ENCODE measurements at regions of chr6 and their contacts with region 1.

Region 1: DNA sequence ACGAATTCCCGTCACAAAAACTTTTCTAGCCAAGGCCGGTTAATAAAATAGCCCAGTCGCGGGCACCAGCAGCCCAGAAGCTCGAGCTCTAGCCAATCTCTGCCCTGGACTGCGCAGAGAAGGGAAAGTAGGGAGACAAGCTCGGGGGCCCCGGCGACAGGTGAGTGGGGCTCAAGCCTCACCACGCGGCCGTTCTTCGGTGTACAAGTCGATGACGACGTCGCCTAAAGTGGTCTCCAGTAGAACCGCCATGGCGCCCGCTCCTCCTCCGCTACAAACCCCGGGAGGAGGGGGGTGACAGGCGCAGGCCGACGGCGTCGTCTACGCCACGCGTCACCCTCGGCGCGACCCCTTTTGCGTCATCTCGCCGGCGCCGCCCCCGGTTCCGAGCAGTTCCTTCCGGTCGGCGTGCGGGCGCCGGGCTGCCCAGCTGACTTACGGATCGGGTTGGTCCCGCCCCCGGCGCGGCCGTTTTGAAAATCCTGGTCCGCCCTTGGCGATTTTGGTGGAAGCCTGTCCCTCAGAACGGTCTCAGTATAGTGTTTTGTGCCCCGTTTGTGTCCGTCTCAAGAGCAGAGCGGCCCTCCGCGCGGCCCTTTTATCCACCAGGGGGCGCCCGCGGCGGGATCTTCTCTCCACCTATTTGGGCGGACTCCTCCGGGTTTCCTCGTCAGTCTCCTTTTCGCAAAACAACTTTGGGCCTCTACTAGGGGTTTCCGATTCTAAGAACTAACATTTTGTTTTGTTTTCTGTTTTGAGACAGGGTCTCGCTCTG is at the start of gene PPIL4:
- DNase-seq: peak; percentile 73 to 86
- H3K4me3 ChIP-seq: peak within 1 kb of the TSS; percentile 76
- H3K27ac ChIP-seq: peak within 1 kb of the TSS; percentile 84
- H3K4me1 ChIP-seq: peaks cover 13% of the 10 kb centered on the region
- H3K27me3 ChIP-seq: no peaks in the 10 kb centered on the region
- CTCF ChIP-seq: peak; percentile 98
- total RNA-seq, gene PPIL4: 9.6 and 13.5 TPM in 2 replicates

Region 2: DNA sequence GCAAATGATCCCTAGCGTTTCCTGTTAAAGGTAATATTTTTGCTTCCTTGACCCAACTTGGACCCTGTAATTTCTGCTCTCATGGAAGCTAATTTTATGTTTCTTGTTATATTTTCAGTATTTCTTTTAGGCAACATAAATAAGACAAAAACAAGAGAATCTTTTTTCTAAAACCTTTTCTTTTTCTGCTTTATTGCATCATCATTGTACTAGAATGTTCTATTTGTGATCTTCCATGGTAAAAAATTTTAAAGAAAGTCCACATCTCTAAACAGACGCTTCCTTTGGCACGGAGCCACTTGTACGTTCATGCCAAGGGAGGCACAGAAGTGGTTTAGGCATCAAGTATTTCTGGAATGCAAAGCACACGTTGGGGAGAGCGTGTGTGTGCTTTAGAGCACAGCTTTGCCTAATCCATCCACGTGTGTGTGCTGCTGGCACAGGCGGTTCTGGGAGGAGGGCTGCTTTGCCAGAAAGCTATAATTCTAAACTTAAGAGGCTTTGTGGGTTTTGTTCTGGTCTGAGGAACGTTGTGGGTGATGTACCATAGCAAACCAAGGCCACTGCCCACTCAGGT is 1105.0 kb before region 1 on chr6:
- CTCF ChIA-PET with region 1: interaction called, 10 read pairs
- POLR2A ChIA-PET with region 1: no interaction called
- intact Hi-C with region 1: no loop called
- DNase-seq: peak; percentile 59 to 91
- H3K4me3 ChIP-seq: no peak overlapping the region
- H3K27ac ChIP-seq: peak overlapping the region; percentile 85
- H3K4me1 ChIP-seq: peaks cover 58% of the 10 kb centered on the region
- H3K27me3 ChIP-seq: no peaks in the 10 kb centered on the region
- CTCF ChIP-seq: no peak

Region 3: DNA sequence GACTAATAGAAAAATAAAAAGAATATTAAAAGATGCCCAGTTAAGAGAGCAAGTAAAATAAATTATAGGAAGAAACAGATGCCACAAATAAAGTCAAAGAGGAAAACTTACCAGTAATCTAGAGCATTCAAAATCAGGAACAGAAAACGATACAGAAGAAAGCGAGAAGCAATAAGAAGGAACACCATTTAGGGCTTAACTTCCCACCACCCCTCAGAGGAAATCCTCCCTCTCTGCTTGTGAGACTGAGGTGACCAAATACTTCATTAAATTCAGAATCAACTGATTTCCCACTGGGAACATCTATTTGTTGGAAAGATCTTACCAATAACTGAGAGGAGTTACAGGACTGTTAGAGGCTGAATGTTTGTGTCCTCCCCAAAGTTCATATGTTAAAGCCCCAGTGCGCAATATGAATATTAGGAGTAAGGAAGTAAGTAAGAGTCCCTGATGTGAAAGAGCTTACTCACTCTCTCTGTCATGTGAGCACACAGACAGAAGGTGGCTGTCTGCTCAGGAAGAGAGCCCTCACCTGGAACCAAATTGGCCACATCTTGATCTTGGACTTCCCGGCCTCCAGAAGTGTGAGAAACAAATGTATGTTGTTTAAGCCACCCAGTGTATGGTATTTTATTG is 83.1 kb after region 1 on chr6:
- CTCF ChIA-PET with region 1: no interaction called
- POLR2A ChIA-PET with region 1: no interaction called
- intact Hi-C with region 1: no loop called
- DNase-seq: no peak
- H3K4me3 ChIP-seq: no peak overlapping the region
- H3K27ac ChIP-seq: peak overlapping the region; percentile 23; the same call in 1 of the 2 replicates
- H3K4me1 ChIP-seq: no peaks in the 10 kb centered on the region
- H3K27me3 ChIP-seq: no peaks in the 10 kb centered on the region
- CTCF ChIP-seq: no peak

Region 4: GRCh38 chr6:149648148-149649145 is 102.5 kb after region 1 on chr6 and contains the start of gene KATNA1:
- CTCF ChIA-PET with region 1: no interaction called
- POLR2A ChIA-PET with region 1: no interaction called
- intact Hi-C with region 1: loop called (anchors 1 kb)
- DNase-seq: peak; percentile 79 to 90
- H3K4me3 ChIP-seq: peak within 1 kb of the TSS; percentile 81
- H3K27ac ChIP-seq: peak within 1 kb of the TSS; percentile 67
- H3K4me1 ChIP-seq: peaks cover 20% of the 10 kb centered on the region
- H3K27me3 ChIP-seq: no peaks in the 10 kb centered on the region
- CTCF ChIP-seq: no peak
- total RNA-seq, gene KATNA1: 12.4 and 16.1 TPM in 2 replicates

Region 5: DNA sequence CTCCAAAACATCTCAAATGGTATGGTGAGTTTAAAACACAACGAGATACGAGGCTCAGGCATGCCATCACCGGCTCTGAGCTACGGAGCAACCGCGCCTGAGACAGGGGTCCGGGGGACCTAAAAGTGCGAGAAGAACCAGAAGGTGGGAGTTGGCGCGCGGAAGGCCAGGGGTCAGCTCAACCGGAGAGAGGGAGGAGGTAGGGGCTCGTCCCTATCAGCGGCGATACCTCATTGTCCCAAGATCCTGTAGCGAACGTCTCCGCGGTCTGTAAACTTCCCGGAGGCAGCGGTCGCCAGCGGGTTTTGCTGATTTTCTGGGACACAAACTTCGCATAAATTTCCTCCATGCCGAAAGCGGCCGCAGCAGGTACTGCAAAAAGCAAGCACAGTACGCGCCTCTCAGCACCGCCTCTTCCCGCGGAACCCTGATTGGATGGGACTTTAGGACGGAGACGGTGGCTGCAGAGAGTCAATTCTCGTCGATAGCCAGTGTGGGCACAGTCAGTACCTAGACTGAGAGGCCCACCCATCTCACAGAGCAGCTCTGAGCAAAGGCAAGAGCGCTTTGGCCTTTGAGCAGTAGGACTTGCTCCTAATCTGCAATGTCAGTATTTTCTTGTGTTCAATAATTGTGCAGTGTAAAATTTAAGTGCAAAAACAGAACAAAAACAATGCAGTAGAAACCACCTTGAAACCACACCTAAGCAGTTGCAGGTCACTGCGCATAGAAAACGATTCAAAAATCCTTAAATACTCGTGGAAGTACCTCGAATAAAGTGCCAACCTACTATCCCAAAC is 200.4 kb after region 1 on chr6 and contains the start of gene NUP43:
- CTCF ChIA-PET with region 1: no interaction called
- POLR2A ChIA-PET with region 1: no interaction called
- intact Hi-C with region 1: loop called (anchors 10 kb)
- DNase-seq: peak; percentile 80 to 81
- H3K4me3 ChIP-seq: peak within 1 kb of the TSS; percentile 91
- H3K27ac ChIP-seq: peak within 1 kb of the TSS; percentile 46
- H3K4me1 ChIP-seq: peaks cover 16% of the 10 kb centered on the region
- H3K27me3 ChIP-seq: no peaks in the 10 kb centered on the region
- CTCF ChIP-seq: peak; percentile 61
- total RNA-seq, gene NUP43: 25.1 and 36.2 TPM in 2 replicates

Measured in PC-9 (cell line).